Dendritic cell treated with granulocyte-macrophage colony-stimulating factor and Interleukin-4, amounts not matched to agents 40 ng/mL and 50 ng/mL, for 4 days (primary cell): ENCODE measurements at regions of chr18 and their contacts with region 1.

Region 1: GRCh38 chr18:77433076-77433475 is 183.4 kb downstream of the GALR1 start:
- H3K4me3 Mint-ChIP-seq: no peak overlapping the region
- H3K27ac Mint-ChIP-seq: no peak overlapping the region
- H3K4me1 Mint-ChIP-seq: no peaks in the 10 kb centered on the region
- H3K27me3 Mint-ChIP-seq: peaks cover 1% of the 10 kb centered on the region

Region 2: DNA sequence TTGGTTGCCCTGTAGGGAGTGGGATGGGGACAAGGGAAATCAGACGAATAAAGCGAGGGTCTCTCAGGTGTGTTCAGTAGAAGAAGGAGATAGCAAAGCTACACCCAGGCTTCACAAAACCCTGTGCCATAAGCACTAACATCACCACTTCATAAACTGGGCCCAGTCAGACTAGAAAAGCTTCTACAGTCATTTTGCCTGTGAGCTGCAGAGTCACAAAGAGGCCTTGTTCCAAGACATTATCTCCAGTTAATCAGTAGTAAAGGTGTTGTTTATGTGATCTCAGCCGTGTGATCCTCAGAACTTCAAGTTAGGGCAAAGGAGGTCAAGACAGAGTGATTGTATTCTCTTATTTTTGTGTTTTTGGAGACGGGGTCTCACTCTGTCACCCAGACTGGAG is 35.5 kb before region 1 on chr18:
- intact Hi-C with region 1: loop called (anchors 2 kb)
- H3K4me3 Mint-ChIP-seq: no peak overlapping the region
- H3K27ac Mint-ChIP-seq: no peak overlapping the region
- H3K4me1 Mint-ChIP-seq: no peaks in the 10 kb centered on the region
- H3K27me3 Mint-ChIP-seq: no peaks in the 10 kb centered on the region

Region 3: GRCh38 chr18:77765468-77765867 is 332.4 kb after region 1 on chr18:
- intact Hi-C with region 1: no loop called
- H3K4me3 Mint-ChIP-seq: no peak overlapping the region
- H3K27ac Mint-ChIP-seq: no peak overlapping the region
- H3K4me1 Mint-ChIP-seq: peaks cover 5% of the 10 kb centered on the region
- H3K27me3 Mint-ChIP-seq: peaks cover 4% of the 10 kb centered on the region